Dendritic cell treated with granulocyte-macrophage colony-stimulating factor and Interleukin-4, amounts not matched to agents 40 ng/mL and 50 ng/mL, for 4 days (primary cell): ENCODE measurements at regions of chr14 and their contacts with region 1.

Region 1: GRCh38 chr14:92951912-92952471 is 29.0 kb downstream of the CHGA start:
- H3K4me3 Mint-ChIP-seq: peak overlapping the region; percentile 27
- H3K27ac Mint-ChIP-seq: peak overlapping the region; percentile 83
- H3K4me1 Mint-ChIP-seq: peaks cover 29% of the 10 kb centered on the region
- H3K27me3 Mint-ChIP-seq: no peaks in the 10 kb centered on the region

Region 2: DNA sequence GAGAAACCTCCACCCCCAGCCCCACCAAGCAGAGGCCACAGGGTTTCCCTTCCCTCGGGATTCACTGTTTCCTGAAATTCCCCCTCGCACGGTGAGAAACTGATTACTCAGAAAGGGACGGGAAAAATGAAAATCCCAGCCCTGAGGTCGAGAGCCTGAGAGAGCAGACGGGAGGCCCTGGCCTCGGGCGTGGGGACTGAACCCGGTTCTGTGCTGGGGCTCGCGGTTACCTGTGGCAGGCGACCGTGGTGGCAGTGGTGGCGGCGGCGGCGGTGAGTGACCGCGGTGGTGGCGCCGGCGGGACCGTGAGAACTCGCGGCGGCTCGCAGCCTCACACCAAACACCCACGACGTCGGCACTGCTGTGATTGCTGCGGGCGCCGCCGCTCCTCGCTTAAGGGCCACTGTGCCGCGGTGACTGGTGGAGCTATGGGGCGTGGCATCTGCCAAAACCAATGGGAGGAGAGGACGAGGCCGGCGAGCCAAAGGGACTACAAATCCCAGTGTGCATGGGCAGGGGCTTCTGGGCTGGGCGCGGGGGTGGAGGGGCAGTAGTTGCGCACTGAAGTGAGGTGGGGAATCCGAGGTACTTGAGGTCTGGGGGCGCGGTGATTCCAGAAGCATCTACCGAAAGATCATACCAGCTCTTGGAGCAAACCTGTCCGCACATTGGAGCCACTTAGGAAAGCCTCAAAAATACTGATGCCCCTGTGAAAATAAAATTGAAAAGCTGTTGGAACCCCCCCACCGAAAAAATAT is 203.6 kb before region 1 on chr14 and contains the start of gene LGMN:
- intact Hi-C with region 1: no loop called
- H3K4me3 Mint-ChIP-seq: peak within 1 kb of the TSS; percentile 82
- H3K27ac Mint-ChIP-seq: peak within 1 kb of the TSS; percentile 93
- H3K4me1 Mint-ChIP-seq: peaks cover 65% of the 10 kb centered on the region
- H3K27me3 Mint-ChIP-seq: peaks cover 64% of the 10 kb centered on the region

Region 3: GRCh38 chr14:93115069-93115820 is 163.3 kb after region 1 on chr14:
- intact Hi-C with region 1: loop called (anchors 2 kb)
- H3K4me3 Mint-ChIP-seq: peak overlapping the region; percentile 83
- H3K27ac Mint-ChIP-seq: peak overlapping the region; percentile 86
- H3K4me1 Mint-ChIP-seq: peaks cover 66% of the 10 kb centered on the region
- H3K27me3 Mint-ChIP-seq: no peaks in the 10 kb centered on the region

Region 4: DNA sequence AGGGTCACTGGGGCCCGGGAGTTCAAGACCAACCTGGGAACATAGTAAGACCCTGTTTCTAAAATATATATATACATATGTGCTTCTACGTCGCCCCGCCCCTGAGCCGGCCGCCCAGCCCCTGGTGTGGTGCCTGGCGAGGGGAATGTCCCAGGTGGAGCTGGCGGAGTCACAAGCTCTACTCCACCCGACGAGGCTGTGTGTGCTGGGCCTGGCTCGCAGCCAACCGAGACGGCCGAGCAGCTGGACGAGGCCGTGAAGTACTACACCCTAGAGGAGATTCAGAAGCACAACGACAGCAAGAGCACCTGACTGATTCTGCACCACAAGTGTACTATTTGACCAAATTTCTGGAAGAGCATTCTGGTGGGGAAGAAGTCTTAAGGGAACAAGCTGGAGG is 185.9 kb after region 1 on chr14:
- intact Hi-C with region 1: loop called (anchors 1 kb)
- H3K4me3 Mint-ChIP-seq: no peak overlapping the region
- H3K27ac Mint-ChIP-seq: no peak overlapping the region
- H3K4me1 Mint-ChIP-seq: peaks cover 42% of the 10 kb centered on the region
- H3K27me3 Mint-ChIP-seq: no peaks in the 10 kb centered on the region

Region 5: DNA sequence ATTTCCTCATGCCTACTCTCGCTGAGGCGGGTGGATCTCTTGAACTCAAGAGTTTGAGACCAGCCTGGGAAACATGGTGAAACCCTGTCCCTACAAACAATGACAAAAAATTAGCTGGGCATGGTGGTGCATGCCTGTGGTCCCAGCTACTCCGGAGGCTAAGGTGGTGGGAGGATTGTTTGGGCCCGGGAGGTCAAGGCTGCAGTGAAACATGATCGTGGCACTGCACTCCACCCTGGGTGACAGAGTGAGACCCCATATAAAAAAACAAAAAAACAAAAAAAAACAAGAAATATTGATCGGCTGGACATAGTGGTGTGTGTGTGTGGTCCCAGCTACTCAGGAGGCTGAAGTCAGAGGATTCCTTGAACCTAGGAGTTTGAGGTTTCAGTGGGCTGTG is 223.5 kb after region 1 on chr14:
- intact Hi-C with region 1: loop called (anchors 5 kb)
- H3K4me3 Mint-ChIP-seq: no peak overlapping the region
- H3K27ac Mint-ChIP-seq: no peak overlapping the region
- H3K4me1 Mint-ChIP-seq: peaks cover 6% of the 10 kb centered on the region
- H3K27me3 Mint-ChIP-seq: peaks cover 4% of the 10 kb centered on the region